ENCODE measurements at regions of chr11 and their contacts with region 1.

Region 1: DNA sequence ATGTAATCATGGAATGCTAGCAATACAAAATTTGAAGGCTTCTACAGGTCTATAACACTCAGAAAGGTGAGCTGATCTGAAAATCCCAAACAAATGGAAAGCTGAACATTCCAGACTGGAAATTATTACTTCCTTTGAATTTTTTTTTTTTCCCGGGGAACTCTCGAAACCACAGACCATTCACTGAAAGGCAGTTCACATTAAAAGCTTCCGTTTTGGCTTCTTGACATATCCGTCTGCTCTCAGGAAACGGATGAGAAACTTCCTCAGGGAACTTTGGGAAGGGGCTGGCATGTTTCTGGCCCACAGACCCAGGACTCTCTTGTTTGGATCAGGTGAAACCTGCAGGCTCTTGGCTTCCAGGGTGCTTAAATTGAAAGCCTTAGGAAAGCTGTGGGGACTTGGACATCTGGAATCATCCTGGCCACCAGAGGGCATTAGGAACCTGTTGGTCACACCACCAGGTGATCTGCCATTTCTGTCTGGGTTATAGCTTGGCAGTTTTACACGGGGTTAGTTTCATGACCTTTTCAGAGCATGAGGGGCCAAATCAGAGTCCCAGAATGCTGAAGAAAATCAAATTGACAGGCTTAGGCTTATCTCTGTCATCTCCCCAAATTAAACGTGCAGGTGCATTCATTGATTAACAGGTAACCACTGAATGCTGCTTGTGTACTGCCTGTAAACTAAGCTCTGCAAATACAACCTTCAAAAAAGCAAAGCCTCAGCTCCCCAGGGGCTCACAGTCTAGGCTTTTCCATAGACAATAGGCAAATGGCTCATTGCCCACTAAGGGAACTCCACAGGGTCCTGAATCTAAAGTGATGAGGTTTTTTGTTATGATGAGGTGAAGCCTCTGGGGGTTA is 22.7 kb upstream of the GRAMD1B start:
- DNase-seq: peak; percentile 23 to 70 (median 48)
- ATAC-seq: peak; percentile 79
- H3K4me3 ChIP-seq: no peak overlapping the region
- H3K4me3 Mint-ChIP-seq: peak overlapping the region in 2 of 10 donors; percentile 59 to 82
- H3K27ac ChIP-seq: no peak overlapping the region
- H3K27ac Mint-ChIP-seq: peak overlapping the region in 1 of 9 donors; percentile 81
- H3K4me1 ChIP-seq: no peaks in the 10 kb centered on the region
- H3K4me1 Mint-ChIP-seq: peaks cover 0 to 65% (median 0%) of the 10 kb centered on the region in 7 donors
- H3K27me3 ChIP-seq: no peaks in the 10 kb centered on the region
- H3K27me3 Mint-ChIP-seq: peaks cover 0 to 12% (median 0%) of the 10 kb centered on the region in 5 donors

Region 2: DNA sequence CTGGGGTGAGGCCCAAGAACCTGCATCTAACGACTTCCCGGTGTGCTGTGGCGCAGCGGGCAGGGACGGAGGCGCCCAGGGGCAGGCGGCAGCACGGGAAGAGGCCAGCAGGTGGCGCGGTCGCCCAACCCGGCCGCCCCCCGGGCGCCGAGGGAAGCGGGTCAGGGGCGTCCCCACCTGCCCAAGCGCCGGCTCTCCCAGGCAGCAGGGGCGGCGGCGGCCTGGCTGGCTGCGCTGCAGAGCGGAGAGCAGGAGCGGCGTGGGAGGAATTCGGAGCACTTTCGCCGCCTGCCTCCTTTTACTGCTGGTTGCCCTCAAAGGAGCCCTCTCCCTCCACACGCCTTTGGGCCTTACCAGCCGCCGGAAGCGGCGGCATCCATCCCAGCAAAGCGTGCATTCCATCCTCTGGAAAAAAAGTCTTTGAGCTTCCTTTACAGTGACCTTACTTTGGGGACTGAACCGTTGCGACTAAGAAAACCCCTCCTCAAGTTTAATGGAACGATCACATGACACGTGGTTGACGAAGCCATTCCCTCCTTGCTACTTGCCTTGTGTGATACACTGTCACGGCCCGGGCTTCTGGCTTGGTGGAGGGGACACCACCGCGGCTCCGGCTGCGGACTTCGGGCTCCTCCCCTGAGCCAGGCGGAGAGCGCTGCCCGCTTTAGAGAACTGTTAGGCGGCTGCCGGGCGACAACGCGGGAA is 105.5 kb before region 1 on chr11:
- CTCF ChIA-PET with region 1: no interaction called
- POLR2A ChIA-PET with region 1: no interaction called
- intact Hi-C with region 1: loop called (anchors 1 kb)
- DNase-seq: peak; percentile 20 to 87 (median 50)
- ATAC-seq: peak; percentile 88
- H3K4me3 ChIP-seq: peak overlapping the region; percentile 40
- H3K4me3 Mint-ChIP-seq: peak overlapping the region; percentile 61 to 77 (median 70)
- H3K27ac ChIP-seq: no peak overlapping the region
- H3K27ac Mint-ChIP-seq: peak overlapping the region in 1 of 9 donors; percentile 68
- H3K4me1 ChIP-seq: peaks cover 11 to 25% of the 10 kb centered on the region in 2 donors
- H3K4me1 Mint-ChIP-seq: peaks cover 0 to 52% (median 21%) of the 10 kb centered on the region in 7 donors
- H3K27me3 ChIP-seq: no peaks in the 10 kb centered on the region
- H3K27me3 Mint-ChIP-seq: peaks cover 2 to 15% (median 12%) of the 10 kb centered on the region in 5 donors

Region 3: GRCh38 chr11:123381817-123382554 is 25.4 kb before region 1 on chr11:
- CTCF ChIA-PET with region 1: interaction called, 3 read pairs
- POLR2A ChIA-PET with region 1: no interaction called
- intact Hi-C with region 1: loop called in 1 of 2 experiments (anchors 1 kb)
- DNase-seq: peak in 1 of 9 donors; percentile 65
- ATAC-seq: peak; percentile 45
- H3K4me3 ChIP-seq: no peak overlapping the region
- H3K4me3 Mint-ChIP-seq: peak overlapping the region in 1 of 10 donors; percentile 77
- H3K27ac ChIP-seq: no peak overlapping the region
- H3K27ac Mint-ChIP-seq: peak overlapping the region in 1 of 9 donors; percentile 86
- H3K4me1 ChIP-seq: peaks cover 0 to 6% of the 10 kb centered on the region in 2 donors
- H3K4me1 Mint-ChIP-seq: peaks cover 0 to 48% (median 3%) of the 10 kb centered on the region in 7 donors
- H3K27me3 ChIP-seq: peaks cover 0 to 3% of the 10 kb centered on the region in 2 donors
- H3K27me3 Mint-ChIP-seq: no peaks in the 10 kb centered on the region

Region 4: GRCh38 chr11:123438191-123438627 is 30.8 kb after region 1 on chr11:
- CTCF ChIA-PET with region 1: interaction called, 21 read pairs
- POLR2A ChIA-PET with region 1: no interaction called
- intact Hi-C with region 1: loop called (anchors 1 kb)
- DNase-seq: no peak
- ATAC-seq: no peak
- H3K4me3 ChIP-seq: no peak overlapping the region
- H3K4me3 Mint-ChIP-seq: peak overlapping the region in 2 of 10 donors; percentile 3 to 69
- H3K27ac ChIP-seq: no peak overlapping the region
- H3K27ac Mint-ChIP-seq: peak overlapping the region in 2 of 9 donors; percentile 69 to 89
- H3K4me1 ChIP-seq: no peaks in the 10 kb centered on the region
- H3K4me1 Mint-ChIP-seq: peaks cover 0 to 88% (median 13%) of the 10 kb centered on the region in 7 donors
- H3K27me3 ChIP-seq: no peaks in the 10 kb centered on the region
- H3K27me3 Mint-ChIP-seq: no peaks in the 10 kb centered on the region

Region 5: GRCh38 chr11:123580557-123581275 is 173.4 kb after region 1 on chr11:
- CTCF ChIA-PET with region 1: interaction called, 4 read pairs
- POLR2A ChIA-PET with region 1: no interaction called
- intact Hi-C with region 1: loop called in 1 of 2 experiments (anchors 1 kb)
- DNase-seq: peak; percentile 43 to 71 (median 56)
- ATAC-seq: peak; percentile 91
- H3K4me3 ChIP-seq: no peak overlapping the region
- H3K4me3 Mint-ChIP-seq: peak overlapping the region in 5 of 10 donors; percentile 9 to 62 (median 25)
- H3K27ac ChIP-seq: no peak overlapping the region
- H3K27ac Mint-ChIP-seq: peak overlapping the region in 2 of 9 donors; percentile 4 to 36
- H3K4me1 ChIP-seq: peaks cover 0 to 4% of the 10 kb centered on the region in 2 donors
- H3K4me1 Mint-ChIP-seq: peaks cover 7 to 30% (median 18%) of the 10 kb centered on the region in 7 donors
- H3K27me3 ChIP-seq: no peaks in the 10 kb centered on the region
- H3K27me3 Mint-ChIP-seq: peaks cover 0 to 4% (median 0%) of the 10 kb centered on the region in 5 donors

Measured in naive thymus-derived CD4-positive, alpha-beta T cell (primary cell).